PC-9 (cell line): ENCODE measurements at regions of chr2 and their contacts with region 1.

Region 1: GRCh38 chr2:219459460-219460311 is 25.0 kb downstream of the SPEG start:
- DNase-seq: peak in 1 of 2 experiments; percentile 50
- H3K4me3 ChIP-seq: no peak overlapping the region
- H3K27ac ChIP-seq: no peak overlapping the region
- H3K4me1 ChIP-seq: peaks cover 27% of the 10 kb centered on the region
- H3K27me3 ChIP-seq: no peaks in the 10 kb centered on the region
- CTCF ChIP-seq: peak; percentile 91

Region 2: GRCh38 chr2:218418717-218419458 is 1040.8 kb before region 1 on chr2 and contains the start of gene VIL1:
- CTCF ChIA-PET with region 1: no interaction called
- POLR2A ChIA-PET with region 1: no interaction called
- intact Hi-C with region 1: no loop called
- DNase-seq: no peak
- H3K4me3 ChIP-seq: no peak within 1 kb of the TSS
- H3K27ac ChIP-seq: no peak within 1 kb of the TSS
- H3K4me1 ChIP-seq: no peaks in the 10 kb centered on the region
- H3K27me3 ChIP-seq: no peaks in the 10 kb centered on the region
- CTCF ChIP-seq: no peak
- total RNA-seq, gene VIL1: not detected in 2 replicates

Region 3: DNA sequence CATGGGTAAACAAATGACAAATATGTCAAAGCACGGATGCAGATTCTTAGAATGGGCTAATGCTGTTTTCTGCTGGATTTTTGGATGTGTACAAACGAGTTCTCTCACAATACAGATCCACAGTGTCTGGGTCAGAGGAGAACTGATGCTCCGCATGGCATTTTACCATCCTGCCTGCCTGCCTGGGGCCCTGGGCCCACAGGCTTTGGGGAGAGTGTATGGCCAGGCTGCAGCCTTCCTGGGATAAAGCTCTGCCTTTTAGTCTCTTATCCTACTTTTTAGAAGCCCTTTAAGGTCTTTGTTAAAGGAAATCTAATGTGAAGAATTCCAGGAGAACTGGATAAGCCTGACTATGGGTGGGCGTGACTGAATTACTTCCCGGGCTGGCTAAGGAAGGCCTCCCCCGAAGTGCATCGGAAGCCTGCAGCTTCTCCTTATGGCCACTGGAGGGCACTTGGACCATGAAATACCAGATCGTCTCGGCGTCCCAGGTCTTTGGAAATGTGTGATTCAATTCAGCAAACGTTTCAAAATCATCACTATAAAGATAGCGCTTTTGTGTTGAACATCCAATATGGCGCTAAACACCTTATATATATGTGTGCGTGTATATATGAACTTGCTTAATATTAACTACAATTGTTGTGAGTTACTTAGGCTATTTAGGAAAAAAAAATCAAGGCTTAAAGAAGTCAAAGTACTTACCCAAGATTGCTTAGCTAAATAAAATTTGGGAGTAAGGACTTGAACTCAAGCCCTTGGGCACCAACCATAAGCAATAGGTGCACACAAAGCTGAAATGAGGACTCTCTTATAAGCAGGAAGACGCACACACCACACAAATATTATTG is 56.8 kb before region 1 on chr2:
- CTCF ChIA-PET with region 1: interaction called, 3 read pairs
- POLR2A ChIA-PET with region 1: no interaction called
- intact Hi-C with region 1: loop called (anchors 5 kb)
- DNase-seq: peak; percentile 67 to 78
- H3K4me3 ChIP-seq: no peak overlapping the region
- H3K27ac ChIP-seq: no peak overlapping the region
- H3K4me1 ChIP-seq: peaks cover 36% of the 10 kb centered on the region
- H3K27me3 ChIP-seq: no peaks in the 10 kb centered on the region
- CTCF ChIP-seq: peak; percentile 92

Region 4: GRCh38 chr2:219484343-219485200 is 24.9 kb after region 1 on chr2:
- CTCF ChIA-PET with region 1: no interaction called
- POLR2A ChIA-PET with region 1: no interaction called
- intact Hi-C with region 1: no loop called
- DNase-seq: no peak
- H3K4me3 ChIP-seq: no peak overlapping the region
- H3K27ac ChIP-seq: no peak overlapping the region
- H3K4me1 ChIP-seq: no peaks in the 10 kb centered on the region
- H3K27me3 ChIP-seq: no peaks in the 10 kb centered on the region
- CTCF ChIP-seq: no peak

Region 5: DNA sequence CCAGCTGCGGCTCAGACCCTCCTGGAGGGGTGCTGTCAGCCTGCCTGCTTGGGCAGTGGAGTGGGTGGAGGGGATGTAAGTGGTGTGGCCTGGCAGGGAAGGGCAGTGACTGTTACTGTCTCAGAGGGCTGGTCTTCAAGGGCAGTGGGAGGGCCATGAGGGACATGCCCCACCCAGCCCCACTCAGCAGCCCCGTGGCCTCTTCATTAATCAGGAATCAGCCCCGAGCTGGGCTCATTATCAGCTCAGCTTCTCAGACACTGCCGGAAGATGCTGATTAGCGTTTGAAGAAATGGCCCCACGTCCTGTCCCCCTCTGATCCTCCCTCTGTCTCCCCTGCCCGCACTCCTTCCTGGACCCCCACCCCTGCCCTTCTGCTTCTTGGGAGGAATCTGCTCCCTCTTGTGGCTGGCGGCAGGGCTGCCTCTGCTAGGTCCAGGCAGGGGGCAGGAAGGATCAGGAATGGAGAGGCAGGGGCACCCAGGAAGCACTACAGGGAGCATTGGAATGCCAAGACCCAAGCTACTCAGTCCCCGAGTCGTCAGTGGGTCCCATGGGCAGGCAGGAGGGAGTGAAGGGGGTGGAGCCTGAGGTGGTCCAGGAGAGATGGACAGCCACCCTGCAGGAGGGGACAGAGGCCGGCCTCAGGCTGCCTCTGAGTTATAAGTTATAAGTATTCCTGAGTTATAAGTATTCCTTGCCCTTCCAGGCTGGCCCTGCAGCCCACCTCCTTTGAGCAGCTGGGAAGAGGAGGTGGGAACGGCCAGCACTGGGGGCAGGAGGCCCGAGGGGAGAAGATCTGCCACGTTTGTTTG is 61.6 kb after region 1 on chr2:
- CTCF ChIA-PET with region 1: no interaction called
- POLR2A ChIA-PET with region 1: interaction called, 3 read pairs
- intact Hi-C with region 1: loop called (anchors 5 kb)
- DNase-seq: peak in 1 of 2 experiments; percentile 64
- H3K4me3 ChIP-seq: peak overlapping the region; percentile 11; the same call in 1 of the 2 replicates
- H3K27ac ChIP-seq: no peak overlapping the region
- H3K4me1 ChIP-seq: peaks cover 15% of the 10 kb centered on the region
- H3K27me3 ChIP-seq: peaks cover 24% of the 10 kb centered on the region
- CTCF ChIP-seq: peak; percentile 81

Region 6: DNA sequence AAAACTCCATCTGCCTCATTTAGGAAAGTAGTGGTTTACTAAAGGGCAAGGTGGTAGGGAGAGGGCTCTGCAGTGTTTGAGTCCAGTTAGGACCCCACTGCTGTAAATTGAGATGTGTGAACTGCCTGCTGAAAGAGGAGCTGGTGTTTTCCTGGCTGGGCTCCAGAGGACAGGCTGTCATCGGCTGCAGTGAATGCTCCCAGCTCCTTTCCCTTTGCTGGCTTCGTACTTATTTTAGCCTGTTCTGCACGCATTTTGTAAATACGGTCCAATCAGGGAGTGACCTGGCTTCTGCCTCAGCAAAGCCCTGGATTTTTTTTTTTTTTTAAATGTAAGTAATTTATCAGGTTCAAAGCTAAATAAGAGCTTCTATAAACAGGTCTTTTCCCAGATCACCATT is 205.3 kb after region 1 on chr2:
- CTCF ChIA-PET with region 1: no interaction called
- POLR2A ChIA-PET with region 1: no interaction called
- intact Hi-C with region 1: no loop called
- DNase-seq: no peak
- H3K4me3 ChIP-seq: no peak overlapping the region
- H3K27ac ChIP-seq: no peak overlapping the region
- H3K4me1 ChIP-seq: peaks cover 29% of the 10 kb centered on the region
- H3K27me3 ChIP-seq: no peaks in the 10 kb centered on the region
- CTCF ChIP-seq: no peak